IMR-90 (cell line): ENCODE measurements at regions of chr3 and their contacts with region 1.

Region 1: GRCh38 chr3:32106280-32106928 is at the start of gene GPD1L:
- DNase-seq: peak; percentile 88
- ATAC-seq: peak; percentile 99
- H3K4me3 ChIP-seq: peak within 1 kb of the TSS; percentile 87
- H3K27ac ChIP-seq: peak within 1 kb of the TSS; percentile 73
- H3K4me1 ChIP-seq: peaks cover 9% of the 10 kb centered on the region
- H3K27me3 ChIP-seq: no peaks in the 10 kb centered on the region
- CTCF ChIP-seq: no peak
- POLR2A ChIP-seq: no peak
- RAD21 ChIP-seq: no peak
- total RNA-seq, gene GPD1L: 7.9 and 9.4 TPM in 2 replicates

Region 2: DNA sequence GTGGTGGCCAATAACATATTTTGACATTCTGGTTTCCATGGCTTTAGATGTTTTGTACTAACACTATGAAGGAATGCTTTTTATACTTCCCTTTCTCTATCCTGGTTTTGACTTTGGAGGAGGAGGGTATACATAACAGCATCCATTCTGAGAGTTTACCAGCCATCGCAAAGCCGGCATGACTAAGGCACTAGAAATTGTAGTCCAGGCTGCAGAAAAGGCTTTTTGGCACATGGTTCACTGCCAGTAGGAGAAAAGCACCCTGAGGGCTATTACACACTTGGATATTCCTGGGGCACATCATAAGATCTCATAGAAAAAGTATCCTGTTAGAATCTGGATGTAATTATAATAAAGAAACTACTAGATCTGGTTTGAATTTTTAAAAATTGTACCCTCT is 471.9 kb before region 1 on chr3:
- CTCF ChIA-PET with region 1: no interaction called
- POLR2A ChIA-PET with region 1: no interaction called
- dilution Hi-C with region 1: no loop called
- in situ Hi-C with region 1: no loop called
- intact Hi-C with region 1: loop called (anchors 5 kb)
- DNase-seq: peak; percentile 70
- ATAC-seq: peak; percentile 85
- H3K4me3 ChIP-seq: no peak overlapping the region
- H3K27ac ChIP-seq: no peak overlapping the region; the same call in 1 of the 2 replicates
- H3K4me1 ChIP-seq: peaks cover 2% of the 10 kb centered on the region; the same call in 1 of the 2 replicates
- H3K27me3 ChIP-seq: no peaks in the 10 kb centered on the region
- CTCF ChIP-seq: no peak
- POLR2A ChIP-seq: no peak
- RAD21 ChIP-seq: no peak

Region 3: GRCh38 chr3:32056559-32057290 is 49.7 kb before region 1 on chr3:
- CTCF ChIA-PET with region 1: no interaction called
- POLR2A ChIA-PET with region 1: no interaction called
- dilution Hi-C with region 1: no loop called
- in situ Hi-C with region 1: no loop called
- intact Hi-C with region 1: no loop called
- DNase-seq: no peak
- ATAC-seq: no peak
- H3K4me3 ChIP-seq: no peak overlapping the region
- H3K27ac ChIP-seq: no peak overlapping the region
- H3K4me1 ChIP-seq: no peaks in the 10 kb centered on the region
- H3K27me3 ChIP-seq: no peaks in the 10 kb centered on the region
- CTCF ChIP-seq: no peak
- POLR2A ChIP-seq: no peak
- RAD21 ChIP-seq: no peak

Region 4: DNA sequence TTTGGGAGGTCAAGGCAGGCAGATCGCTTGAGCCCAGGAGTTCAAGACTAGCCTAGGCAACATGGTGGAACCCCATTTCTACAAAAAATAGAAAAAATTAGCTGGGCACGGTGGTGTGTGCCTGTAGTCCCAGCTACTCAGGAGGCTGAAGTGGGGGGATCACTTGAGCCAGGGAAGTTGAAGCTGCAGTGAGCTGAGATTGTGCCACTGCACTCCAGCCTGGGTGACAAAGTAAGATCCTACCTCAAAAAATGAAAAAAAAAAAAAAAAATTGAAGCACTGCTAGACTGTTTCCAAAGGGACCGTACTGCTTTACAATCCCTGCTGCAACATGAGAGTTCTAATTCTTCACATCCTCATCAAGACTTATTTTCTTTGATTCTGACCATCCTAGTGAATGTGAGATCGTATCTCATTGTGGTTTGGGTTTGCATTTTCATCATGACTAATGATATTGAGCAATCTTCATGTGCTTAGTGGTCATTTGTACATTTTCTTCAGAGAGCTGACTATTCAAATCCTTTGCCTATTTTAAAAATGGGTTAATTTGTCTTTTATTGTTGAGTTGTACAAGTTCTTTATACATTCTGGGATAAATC is 142.9 kb after region 1 on chr3:
- CTCF ChIA-PET with region 1: no interaction called
- POLR2A ChIA-PET with region 1: no interaction called
- dilution Hi-C with region 1: no loop called
- in situ Hi-C with region 1: no loop called
- intact Hi-C with region 1: no loop called
- DNase-seq: peak; percentile 76
- ATAC-seq: peak; percentile 57
- H3K4me3 ChIP-seq: no peak overlapping the region
- H3K27ac ChIP-seq: no peak overlapping the region
- H3K4me1 ChIP-seq: no peaks in the 10 kb centered on the region
- H3K27me3 ChIP-seq: peaks cover 2% of the 10 kb centered on the region
- CTCF ChIP-seq: no peak
- POLR2A ChIP-seq: no peak
- RAD21 ChIP-seq: no peak